ENCODE measurements at regions of chr4 and their contacts with region 1.

Region 1: DNA sequence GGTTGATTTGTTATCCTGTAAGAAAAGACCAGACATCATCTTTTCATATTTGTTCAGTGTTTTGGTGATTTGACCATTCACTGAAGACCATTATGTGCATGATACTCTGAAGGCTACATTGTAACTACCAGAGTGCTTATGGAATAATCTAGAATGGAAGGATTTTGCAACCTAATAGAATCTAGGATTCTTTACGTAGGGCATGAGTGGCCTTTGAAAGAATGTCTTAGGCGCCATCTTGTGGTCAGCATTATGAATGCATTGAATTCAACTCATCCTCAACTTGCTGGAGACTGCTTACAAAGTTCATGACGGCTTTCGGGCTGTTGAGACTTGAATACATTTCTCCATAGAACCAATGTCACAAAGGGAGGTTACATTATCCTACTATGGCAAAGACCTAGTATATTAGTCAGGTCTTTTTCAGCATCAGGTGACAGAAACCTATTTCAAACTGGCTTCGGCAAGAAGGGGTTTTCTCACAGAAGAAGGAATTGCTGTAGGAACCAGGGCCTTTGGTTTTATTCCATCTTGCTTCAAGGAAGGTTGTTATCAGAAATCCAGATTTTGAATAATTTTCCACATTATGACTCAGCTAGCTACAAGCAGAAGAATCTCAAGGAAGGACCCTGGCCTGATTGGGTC is 104.1 kb downstream of the GPAT3 start:
- DNase-seq: peak; percentile 82
- H3K4me3 ChIP-seq: no peak overlapping the region
- H3K27ac ChIP-seq: no peak overlapping the region
- H3K4me1 ChIP-seq: no peaks in the 10 kb centered on the region
- H3K27me3 ChIP-seq: no peaks in the 10 kb centered on the region
- CTCF ChIP-seq: peak; percentile 62 to 81 (median 81)
- POLR2A ChIP-seq: no peak

Region 2: GRCh38 chr4:83340692-83341343 is 299.2 kb before region 1 on chr4:
- intact Hi-C with region 1: no loop called
- DNase-seq: no peak
- H3K4me3 ChIP-seq: no peak overlapping the region
- H3K27ac ChIP-seq: no peak overlapping the region
- H3K4me1 ChIP-seq: no peaks in the 10 kb centered on the region
- H3K27me3 ChIP-seq: no peaks in the 10 kb centered on the region
- CTCF ChIP-seq: no peak
- POLR2A ChIP-seq: no peak

Region 3: DNA sequence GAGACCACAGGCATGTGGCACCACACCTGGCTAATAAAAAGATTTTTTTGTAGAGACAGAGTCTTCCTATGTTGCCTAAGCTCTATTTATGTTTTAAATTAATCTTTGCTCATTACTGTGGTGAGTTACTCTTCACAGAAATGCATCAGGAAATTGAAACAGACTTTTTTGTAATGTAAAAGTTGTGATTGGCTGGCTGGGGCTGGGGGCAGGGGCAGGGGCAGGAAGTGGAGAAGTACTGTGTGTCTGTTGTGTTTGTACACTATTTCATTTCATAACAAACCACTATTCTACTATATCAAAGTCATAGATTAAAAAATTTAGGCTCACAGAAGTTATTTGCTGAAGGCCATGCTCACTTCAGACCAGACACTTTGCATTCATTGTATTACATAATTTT is 136.0 kb before region 1 on chr4:
- intact Hi-C with region 1: loop called (anchors 10 kb)
- DNase-seq: no peak
- H3K4me3 ChIP-seq: no peak overlapping the region
- H3K27ac ChIP-seq: no peak overlapping the region
- H3K4me1 ChIP-seq: no peaks in the 10 kb centered on the region
- H3K27me3 ChIP-seq: no peaks in the 10 kb centered on the region
- CTCF ChIP-seq: no peak
- POLR2A ChIP-seq: no peak

Region 4: DNA sequence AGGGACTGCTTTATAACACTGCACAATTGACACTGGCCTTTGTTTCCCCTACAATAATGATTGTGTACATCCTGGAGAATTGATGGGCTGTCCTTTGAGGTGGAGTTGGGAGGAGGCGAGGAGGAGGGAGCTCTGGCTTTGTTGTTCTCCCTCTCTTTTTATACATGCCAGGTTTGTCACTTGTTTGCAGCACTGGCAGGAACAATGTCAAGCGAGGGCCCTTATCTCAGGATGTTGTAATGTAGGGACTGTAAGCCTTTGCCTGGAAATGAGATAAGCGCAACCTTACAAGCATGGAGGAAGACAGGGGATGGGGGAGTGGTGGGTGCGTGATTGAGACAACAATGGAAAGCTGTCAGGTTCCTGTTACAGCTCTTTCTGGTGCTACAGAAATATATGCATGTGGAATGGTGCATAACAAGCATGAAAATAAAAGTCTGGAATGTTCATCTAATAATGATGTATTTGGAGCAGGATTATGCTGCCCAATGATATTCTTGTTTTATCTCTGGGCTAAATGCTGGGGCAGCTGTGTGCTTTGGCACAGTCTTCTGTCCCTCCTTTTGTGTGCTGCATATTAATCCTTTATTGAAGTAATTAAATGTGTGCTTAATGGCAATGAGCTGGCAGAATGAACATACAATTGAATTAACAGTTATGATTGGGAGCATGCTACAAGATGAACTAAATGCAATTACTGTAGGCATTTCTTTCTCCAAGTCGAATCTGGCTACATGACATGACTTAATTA is 190.3 kb after region 1 on chr4:
- intact Hi-C with region 1: no loop called
- DNase-seq: no peak
- H3K4me3 ChIP-seq: no peak overlapping the region
- H3K27ac ChIP-seq: no peak overlapping the region
- H3K4me1 ChIP-seq: no peaks in the 10 kb centered on the region
- H3K27me3 ChIP-seq: no peaks in the 10 kb centered on the region
- CTCF ChIP-seq: no peak
- POLR2A ChIP-seq: no peak